Left cardiac atrium (tissue), 4 donors: ENCODE measurements at regions of chr3 and their contacts with region 1.

Region 1: DNA sequence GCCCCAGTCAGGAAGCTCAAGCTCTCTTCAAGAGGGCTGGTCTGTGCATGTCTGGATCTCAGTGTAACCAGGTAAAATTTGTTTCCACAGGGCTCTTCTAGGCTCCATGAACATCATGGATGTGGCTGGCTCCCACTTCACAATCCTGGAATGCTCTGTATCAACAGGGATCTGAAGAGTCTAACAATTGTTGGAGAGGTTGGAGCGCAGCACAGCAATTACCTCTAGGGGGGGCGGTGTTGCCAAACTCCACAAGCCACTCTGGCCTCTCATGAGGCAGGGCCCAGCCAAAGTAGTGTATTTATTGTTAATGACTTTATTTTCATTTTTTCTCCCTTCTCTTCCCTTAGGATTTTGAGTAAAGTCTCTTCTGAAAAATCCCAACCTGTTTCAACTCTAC is 6.1 kb upstream of the EIF2B5 start:
- DNase-seq: peak; percentile 31
- ATAC-seq: peak in 1 of 2 donors; percentile 49

Region 2: DNA sequence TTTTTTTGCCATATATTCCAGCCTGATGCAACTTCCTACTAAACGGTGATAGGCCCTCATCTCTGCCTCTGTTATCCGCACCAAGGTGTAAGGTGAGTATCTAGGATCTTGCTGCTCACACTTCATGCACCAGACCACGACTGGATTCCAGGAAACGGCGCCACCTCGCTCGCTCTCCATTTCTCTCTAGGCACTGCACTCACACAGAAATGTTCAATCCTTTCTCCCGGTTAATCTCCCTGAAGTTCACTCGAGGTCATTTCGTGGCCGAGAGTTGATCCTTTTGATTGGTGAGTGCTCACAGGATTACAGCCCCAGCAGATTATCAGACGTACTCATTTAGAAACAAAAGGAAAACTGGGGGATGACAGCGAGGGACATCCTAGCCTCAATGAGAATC is 728.7 kb before region 1 on chr3:
- intact Hi-C with region 1: no loop called
- DNase-seq: no peak
- ATAC-seq: no peak

Region 3: GRCh38 chr3:184031187-184031792 is 97.7 kb before region 1 on chr3 and contains the start of gene HTR3D:
- intact Hi-C with region 1: loop called in 1 of 2 experiments (anchors 5 kb)
- DNase-seq: no peak
- ATAC-seq: no peak
- total RNA-seq, gene HTR3D: not detected